ENCODE measurements at regions of chr2 and their contacts with region 1.

Region 1: DNA sequence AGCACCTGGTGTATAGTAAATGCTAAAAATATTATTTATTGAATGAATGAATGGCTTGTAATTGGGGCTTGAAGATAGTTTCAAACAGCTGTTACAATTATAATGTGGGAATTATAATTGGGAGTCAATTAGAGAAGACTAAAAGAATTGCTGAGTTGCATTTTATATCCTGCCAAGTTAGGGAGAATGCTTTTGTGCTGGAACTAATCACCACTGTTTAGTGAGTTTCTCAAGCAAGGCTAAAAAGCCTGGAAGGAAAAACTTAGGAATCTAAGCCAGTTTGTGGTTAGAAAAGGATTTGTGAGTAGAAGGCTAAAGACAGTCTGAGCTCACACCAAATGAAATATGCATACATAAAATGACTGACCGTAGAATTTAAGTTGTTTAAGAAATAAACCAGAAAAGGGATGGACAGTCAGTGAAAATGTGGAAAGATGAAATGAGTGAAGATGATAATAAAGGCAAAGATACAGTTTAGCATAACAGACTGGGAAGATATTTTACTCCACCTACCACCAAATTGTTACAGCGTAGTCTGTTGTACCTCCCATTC is 647.7 kb upstream of the FSHR start:
- DNase-seq: no peak
- ATAC-seq: no peak

Region 2: GRCh38 chr2:49973917-49974368 is 172.0 kb after region 1 on chr2:
- intact Hi-C with region 1: loop called (anchors 10 kb)
- DNase-seq: peak; percentile 82
- ATAC-seq: peak; percentile 94

Measured in Right ventricle myocardium inferior (tissue), 1 donor.